Panc1 (cell line): ENCODE measurements at regions of chr1 and their contacts with region 1.

Region 1: DNA sequence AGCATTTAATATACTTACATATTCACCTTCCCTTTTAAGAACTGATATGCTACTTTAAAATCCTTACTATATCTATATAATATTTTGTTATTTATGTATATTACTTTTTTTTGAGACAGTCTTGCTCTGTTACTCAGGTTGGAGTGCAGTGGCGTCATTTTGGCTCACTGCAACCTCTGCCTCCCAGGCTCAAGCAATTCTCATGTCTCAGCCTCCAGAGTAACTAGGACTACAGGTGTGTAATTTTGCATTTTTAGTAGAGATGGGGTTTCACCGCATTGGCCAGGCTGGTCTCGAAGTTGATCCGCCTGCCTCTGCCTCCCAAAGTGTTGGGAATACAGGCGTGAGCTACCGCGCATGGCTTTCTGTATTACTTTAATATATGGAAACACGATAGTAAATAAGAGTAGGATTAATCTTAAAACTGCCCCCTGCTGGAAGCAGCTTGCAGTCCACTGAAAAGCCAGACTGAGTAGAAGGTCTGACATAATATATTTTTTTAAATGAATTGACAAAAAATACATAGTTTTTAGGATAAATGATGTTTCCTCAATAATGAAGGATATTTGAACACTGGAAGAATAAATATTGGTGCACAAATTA is 24.4 kb downstream of the RCAN3 start:
- DNase-seq: no peak
- ATAC-seq: peak; percentile 80; the same call in 1 of the 2 replicates
- H3K4me3 ChIP-seq: no peak overlapping the region
- H3K27ac ChIP-seq: no peak overlapping the region
- H3K4me1 ChIP-seq: no peaks in the 10 kb centered on the region
- H3K27me3 ChIP-seq: no peaks in the 10 kb centered on the region
- CTCF ChIP-seq: peak; percentile 83

Region 2: DNA sequence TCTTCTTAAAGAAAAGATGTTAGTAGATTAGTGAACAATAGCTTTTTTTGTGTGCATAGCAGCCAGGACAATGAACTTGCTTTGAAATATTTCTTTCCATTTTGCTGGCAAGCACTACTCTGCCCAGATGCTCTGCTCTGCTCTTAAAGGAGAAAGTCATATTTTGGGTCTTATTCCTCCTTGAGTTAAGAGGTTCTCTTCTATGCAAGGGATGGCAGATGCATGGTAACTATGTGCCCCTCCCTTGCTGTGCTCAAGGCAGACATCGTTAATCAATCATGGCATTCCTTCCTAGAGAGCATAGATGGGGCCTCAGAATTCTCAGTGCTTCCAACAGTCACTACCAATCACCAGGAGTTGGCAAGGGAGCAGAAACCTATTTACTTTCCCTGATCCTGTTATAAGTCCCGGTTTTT is 83.8 kb before region 1 on chr1:
- CTCF ChIA-PET with region 1: no interaction called
- POLR2A ChIA-PET with region 1: no interaction called
- in situ Hi-C with region 1: no loop called
- intact Hi-C with region 1: no loop called
- DNase-seq: no peak
- ATAC-seq: no peak
- H3K4me3 ChIP-seq: no peak overlapping the region
- H3K27ac ChIP-seq: no peak overlapping the region
- H3K4me1 ChIP-seq: no peaks in the 10 kb centered on the region
- H3K27me3 ChIP-seq: no peaks in the 10 kb centered on the region
- CTCF ChIP-seq: no peak

Region 3: GRCh38 chr1:24551960-24552571 is 25.0 kb after region 1 on chr1:
- CTCF ChIA-PET with region 1: no interaction called
- POLR2A ChIA-PET with region 1: no interaction called
- in situ Hi-C with region 1: no loop called
- intact Hi-C with region 1: no loop called
- DNase-seq: no peak
- ATAC-seq: no peak
- H3K4me3 ChIP-seq: no peak overlapping the region
- H3K27ac ChIP-seq: no peak overlapping the region
- H3K4me1 ChIP-seq: 0 out of 2 replicates have a peak, but pooled peaks cover 4% of the 10 kb centered on the region
- H3K27me3 ChIP-seq: no peaks in the 10 kb centered on the region
- CTCF ChIP-seq: no peak

Region 4: DNA sequence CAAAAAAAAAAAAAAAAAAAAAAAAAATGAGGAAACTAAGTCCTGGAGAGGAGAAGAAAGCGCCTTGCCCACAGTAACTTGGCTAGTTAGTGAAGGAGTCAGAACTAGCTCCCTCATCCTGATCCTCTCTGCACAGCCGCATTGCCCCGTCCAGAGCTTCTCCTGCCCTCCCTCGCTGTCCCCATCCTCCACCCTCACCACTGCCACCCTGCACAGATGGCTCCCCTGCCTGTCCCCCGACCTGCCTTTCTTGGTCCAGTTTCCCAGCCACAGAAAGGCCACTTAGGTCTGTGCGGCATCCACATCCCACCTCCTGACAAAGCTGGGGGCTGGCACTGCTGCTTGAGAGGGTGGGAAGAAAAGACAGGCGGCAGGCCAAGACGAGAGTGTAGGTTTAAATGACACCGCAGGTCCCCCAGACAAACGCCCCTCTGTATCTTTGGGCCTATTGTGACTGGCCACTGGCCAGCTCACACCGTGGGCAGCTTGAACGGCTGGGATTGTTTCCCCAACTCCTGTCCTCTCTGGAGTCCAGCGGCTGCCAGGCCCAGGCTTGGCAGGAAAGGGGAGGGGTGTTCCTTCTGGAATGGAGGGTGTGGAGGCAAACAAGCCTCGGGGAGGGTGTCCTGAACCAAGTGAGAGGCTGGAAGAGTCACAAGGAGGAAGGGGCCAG is 49.0 kb after region 1 on chr1:
- CTCF ChIA-PET with region 1: interaction called, 3 read pairs
- POLR2A ChIA-PET with region 1: interaction called, 16 read pairs
- in situ Hi-C with region 1: no loop called
- intact Hi-C with region 1: no loop called
- DNase-seq: no peak
- ATAC-seq: no peak
- H3K4me3 ChIP-seq: no peak overlapping the region
- H3K27ac ChIP-seq: no peak overlapping the region
- H3K4me1 ChIP-seq: no peaks in the 10 kb centered on the region
- H3K27me3 ChIP-seq: no peaks in the 10 kb centered on the region
- CTCF ChIP-seq: no peak